OCI-LY7 (cell line): ENCODE measurements at regions of chrX and their contacts with region 1.

Region 1: DNA sequence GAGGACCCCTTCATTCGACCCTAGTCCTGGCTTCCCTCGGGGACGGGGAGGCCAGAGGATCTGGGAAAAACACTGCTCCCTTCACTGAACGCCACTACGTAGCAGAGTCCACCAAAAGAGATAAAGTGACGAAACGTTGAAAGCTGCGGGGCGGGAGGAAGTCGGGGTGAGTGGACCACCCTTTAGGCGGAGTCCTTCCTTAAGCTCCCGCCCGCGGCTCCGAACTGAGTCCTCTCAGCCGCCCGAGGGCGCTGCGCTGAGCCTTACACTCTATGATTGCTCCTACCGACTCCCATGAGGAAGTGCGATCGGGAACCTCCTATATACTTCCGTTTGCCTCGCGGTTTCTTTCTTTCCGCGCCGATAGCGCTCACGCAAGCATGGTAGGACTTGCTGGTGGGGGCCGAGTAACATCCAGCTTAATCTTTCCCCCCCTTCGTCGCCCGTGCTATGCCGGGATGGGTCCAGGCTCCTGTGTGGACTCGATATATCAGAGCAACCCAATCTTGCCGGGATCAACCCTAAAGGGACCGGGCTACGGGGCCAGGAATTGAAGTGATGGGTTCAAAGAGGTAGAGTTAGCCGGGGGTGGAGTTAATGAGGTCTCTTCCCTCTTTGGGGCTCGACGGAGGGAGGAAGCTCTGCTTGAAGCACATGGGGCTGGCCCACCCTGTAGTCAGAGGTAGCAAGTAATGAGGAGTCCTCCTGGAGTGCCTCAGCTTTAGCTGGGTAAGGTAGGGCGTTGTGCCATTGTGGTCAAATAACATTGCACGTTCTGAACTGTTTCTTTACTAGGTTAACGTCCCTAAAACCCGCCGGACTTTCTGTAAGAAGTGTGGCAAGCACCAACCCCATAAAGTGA is at the start of gene RPL36A:
- DNase-seq: peak; percentile 91
- H3K4me3 ChIP-seq: peak within 1 kb of the TSS; percentile 98
- H3K27ac ChIP-seq: peak within 1 kb of the TSS; percentile 88
- H3K4me1 ChIP-seq: peaks cover 69% of the 10 kb centered on the region
- CTCF ChIP-seq: peak; percentile 74
- total RNA-seq, gene RPL36A: 2,042 and 2,127 TPM in 2 replicates

Region 2: DNA sequence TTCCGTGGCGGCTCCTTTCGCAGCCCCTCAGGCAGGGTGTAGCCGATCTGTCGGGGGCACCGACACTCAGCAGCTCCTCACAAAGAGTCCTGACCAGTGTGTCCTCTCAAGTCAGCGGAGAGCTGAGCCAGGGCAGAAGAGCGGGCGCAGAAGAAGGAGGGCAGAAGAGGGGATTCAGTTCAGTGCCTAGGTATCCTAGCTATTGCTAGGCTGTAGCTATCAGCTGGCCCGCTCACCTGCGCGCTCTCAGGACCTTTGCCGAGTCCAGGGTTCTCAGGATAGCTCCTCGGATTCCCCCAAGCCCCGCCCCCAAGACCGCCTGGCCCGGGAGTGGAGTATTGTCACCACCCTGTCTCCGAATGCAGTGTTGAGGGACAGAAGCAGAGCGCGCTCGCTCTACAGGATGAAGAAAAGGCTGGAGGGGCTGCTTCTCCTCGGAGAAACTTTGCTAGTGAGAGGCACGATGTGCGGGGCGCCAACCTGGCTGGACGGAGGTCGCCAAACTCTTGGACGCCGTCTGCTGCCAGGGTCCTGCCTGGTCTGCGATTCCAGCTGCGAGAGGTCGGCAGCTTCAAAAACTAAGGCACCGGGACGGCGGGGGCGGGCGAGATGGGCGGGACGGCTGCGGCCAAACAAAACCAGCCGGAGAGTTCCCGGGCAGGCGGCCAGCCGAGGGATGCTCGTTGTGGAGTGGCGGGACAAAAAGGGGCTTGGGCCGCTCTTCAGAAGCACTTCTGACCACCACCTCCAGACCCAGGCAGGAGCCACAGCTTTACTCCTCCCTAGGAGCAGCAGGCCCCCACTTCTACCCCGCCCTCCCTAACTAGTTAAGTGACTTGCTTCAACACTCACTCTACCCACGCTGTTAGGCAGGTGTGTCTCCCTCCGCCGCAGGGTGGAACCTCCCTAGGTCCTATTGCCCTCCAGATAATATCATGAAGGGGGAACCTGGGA is 462.0 kb before region 1 on chrX and contains the start of gene XKRX:
- CTCF ChIA-PET with region 1: no interaction called
- POLR2A ChIA-PET with region 1: no interaction called
- intact Hi-C with region 1: loop called (anchors 10 kb)
- DNase-seq: peak; percentile 81
- H3K4me3 ChIP-seq: peak within 1 kb of the TSS; percentile 77
- H3K27ac ChIP-seq: peak within 1 kb of the TSS; percentile 82
- H3K4me1 ChIP-seq: peaks cover 31% of the 10 kb centered on the region
- CTCF ChIP-seq: no peak
- total RNA-seq, gene XKRX: 5.8 and 6.4 TPM in 2 replicates

Region 3: GRCh38 chrX:101348452-101349192 is 42.3 kb before region 1 on chrX and contains the start of gene TIMM8A:
- CTCF ChIA-PET with region 1: no interaction called
- POLR2A ChIA-PET with region 1: interaction called, 15 read pairs
- intact Hi-C with region 1: loop called (anchors 2 kb)
- DNase-seq: peak; percentile 84
- H3K4me3 ChIP-seq: peak within 1 kb of the TSS; percentile 99
- H3K27ac ChIP-seq: peak within 1 kb of the TSS; percentile 59
- H3K4me1 ChIP-seq: peaks cover 24% of the 10 kb centered on the region
- CTCF ChIP-seq: no peak
- total RNA-seq, gene TIMM8A: 11.0 and 14.9 TPM in 2 replicates

Region 4: DNA sequence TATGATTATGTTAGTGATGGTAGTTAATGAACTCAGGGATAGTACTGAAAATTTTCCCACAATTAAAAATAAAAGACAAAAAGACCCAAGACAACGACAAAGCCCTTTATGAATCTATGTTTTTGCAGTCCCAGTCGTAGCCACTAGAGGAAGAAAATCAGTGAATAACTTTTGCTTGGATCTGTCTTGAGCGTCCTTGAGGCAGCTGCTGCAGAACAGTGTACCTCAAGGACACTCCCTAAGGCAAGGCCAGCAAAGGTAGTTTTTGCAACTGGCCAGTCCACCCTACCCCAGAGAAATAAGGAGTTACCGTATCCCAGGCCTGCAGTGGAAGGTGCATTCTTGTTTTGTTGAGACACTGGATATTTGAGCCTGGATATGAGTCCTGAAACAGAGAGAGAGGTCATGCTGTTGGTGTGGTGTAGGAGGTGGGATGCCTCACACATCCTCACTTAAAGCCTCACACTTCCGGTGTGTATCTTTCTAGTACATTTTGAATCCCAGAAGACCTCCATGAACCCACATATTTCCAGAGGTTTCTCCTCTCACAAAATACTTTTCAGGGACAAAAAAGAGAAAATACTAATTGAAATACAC is 33.6 kb before region 1 on chrX:
- CTCF ChIA-PET with region 1: no interaction called
- POLR2A ChIA-PET with region 1: interaction called, 13 read pairs
- intact Hi-C with region 1: loop called (anchors 2 kb)
- DNase-seq: peak; percentile 49
- H3K4me3 ChIP-seq: no peak overlapping the region
- H3K27ac ChIP-seq: peak overlapping the region; percentile 89
- H3K4me1 ChIP-seq: peaks cover 42% of the 10 kb centered on the region
- CTCF ChIP-seq: peak; percentile 70

Region 5: DNA sequence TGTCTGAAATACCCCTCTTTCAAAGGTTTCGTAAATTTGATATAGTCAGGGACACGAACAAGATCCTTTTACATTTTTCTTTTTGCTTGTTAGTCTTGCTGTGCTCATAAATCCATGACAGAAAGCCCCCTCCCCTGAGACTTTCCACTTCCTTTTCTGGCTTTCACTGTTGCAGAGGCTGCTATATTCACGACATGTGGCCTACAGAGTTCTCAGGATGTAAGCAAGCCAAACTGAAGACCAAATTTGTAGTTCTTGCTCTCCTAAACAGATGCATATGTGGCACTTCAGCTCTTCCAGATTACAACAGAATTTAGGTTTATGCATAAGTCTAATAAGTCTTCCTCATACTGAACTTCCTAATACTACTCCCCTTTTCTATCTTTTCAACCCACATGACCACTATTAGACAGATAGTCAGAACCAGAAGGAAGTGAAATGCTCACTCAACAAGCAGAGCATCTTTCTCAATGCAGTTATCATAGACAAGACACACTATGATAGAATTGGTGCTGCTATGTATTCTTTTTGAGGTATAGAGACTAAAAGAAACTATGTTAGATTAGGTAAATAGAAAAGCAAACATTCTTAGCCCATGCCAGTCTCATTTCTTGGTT is 19.9 kb before region 1 on chrX:
- CTCF ChIA-PET with region 1: no interaction called
- POLR2A ChIA-PET with region 1: interaction called, 34 read pairs
- intact Hi-C with region 1: no loop called
- DNase-seq: peak; percentile 79
- H3K4me3 ChIP-seq: peak overlapping the region; percentile 31
- H3K27ac ChIP-seq: peak overlapping the region; percentile 96
- H3K4me1 ChIP-seq: peaks cover 69% of the 10 kb centered on the region
- CTCF ChIP-seq: no peak

Region 6: DNA sequence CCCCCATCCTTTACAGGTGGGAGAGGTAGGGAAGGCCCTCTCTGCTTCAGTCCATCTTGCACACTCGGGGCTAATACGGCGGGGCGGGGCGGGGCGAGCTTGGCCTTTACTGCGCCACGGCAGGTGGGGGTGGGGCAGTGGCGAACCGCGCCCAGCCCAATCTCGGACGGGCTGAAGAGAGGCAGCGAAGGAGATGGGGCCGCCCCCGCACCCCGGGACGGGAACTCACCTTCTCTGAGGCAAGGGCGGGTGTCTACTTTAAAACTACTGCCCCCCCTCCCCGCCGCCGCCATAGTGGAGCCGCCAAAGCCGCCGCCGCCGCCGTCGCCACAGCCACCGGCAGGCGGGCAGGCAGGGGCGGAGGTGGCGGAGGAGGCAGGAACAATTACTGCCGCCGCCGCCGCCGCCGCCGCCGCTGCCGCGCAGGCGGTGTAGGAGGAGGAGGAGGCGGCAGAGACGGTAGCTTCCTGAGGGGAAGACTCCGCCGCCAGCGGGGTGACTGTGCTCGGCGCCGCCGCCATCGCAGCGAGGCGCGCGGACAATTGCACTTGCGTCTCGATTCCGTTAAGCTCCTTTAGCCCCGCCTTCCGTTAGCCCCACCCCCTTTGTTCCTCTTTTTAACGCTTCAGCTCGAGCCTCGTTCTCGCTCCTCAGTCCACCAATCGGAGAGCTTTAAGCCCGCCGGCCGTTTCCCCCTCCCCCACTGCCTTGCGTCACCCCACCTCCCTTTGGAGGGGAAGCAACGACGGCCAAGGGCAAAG is 540.8 kb after region 1 on chrX and contains the start of gene ZMAT1:
- CTCF ChIA-PET with region 1: no interaction called
- POLR2A ChIA-PET with region 1: no interaction called
- intact Hi-C with region 1: no loop called
- DNase-seq: no peak
- H3K4me3 ChIP-seq: no peak within 1 kb of the TSS
- H3K27ac ChIP-seq: no peak within 1 kb of the TSS
- H3K4me1 ChIP-seq: no peaks in the 10 kb centered on the region
- CTCF ChIP-seq: no peak
- total RNA-seq, gene ZMAT1: not detected in 2 replicates